Calu3 (cell line): ENCODE measurements at regions of chr4 and their contacts with region 1.

Region 1: DNA sequence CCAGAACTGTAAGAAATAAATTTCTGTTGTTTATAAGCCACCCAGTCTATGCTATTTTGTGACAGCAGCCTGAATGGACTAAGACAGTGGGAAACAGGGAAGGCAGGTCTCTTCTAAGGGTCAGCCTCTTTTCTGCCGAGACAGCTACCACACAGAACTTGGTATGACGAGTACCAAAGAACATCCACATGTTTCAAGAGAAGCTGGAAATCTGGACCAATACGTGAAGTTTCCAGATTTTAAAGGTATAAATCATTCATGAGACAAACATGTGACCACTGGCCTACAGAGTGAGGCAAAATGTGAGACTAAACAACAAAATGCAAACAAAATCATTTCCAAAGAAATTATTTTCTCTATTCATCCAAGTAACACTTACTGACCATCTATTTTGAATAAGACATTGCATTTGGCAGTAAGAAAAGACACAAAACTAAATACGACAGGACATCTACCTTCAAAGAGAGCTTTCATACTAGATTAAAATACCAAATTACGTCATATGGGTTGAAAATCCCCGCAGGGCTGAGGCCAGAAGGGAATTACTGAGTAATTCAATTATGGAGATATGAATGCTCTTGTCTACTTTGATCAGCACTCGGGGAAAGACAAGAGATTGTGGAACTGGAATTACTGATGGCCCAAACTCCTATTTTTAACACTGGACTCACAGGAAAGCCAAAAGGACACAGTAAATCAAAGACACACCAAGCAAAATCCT is 7.2 kb downstream of the SCARB2 start:
- DNase-seq: no peak
- H3K4me3 Mint-ChIP-seq: no peak overlapping the region
- H3K27ac Mint-ChIP-seq: no peak overlapping the region
- H3K4me1 Mint-ChIP-seq: peaks cover 17% of the 10 kb centered on the region
- H3K27me3 Mint-ChIP-seq: no peaks in the 10 kb centered on the region
- CTCF ChIP-seq: no peak

Region 2: DNA sequence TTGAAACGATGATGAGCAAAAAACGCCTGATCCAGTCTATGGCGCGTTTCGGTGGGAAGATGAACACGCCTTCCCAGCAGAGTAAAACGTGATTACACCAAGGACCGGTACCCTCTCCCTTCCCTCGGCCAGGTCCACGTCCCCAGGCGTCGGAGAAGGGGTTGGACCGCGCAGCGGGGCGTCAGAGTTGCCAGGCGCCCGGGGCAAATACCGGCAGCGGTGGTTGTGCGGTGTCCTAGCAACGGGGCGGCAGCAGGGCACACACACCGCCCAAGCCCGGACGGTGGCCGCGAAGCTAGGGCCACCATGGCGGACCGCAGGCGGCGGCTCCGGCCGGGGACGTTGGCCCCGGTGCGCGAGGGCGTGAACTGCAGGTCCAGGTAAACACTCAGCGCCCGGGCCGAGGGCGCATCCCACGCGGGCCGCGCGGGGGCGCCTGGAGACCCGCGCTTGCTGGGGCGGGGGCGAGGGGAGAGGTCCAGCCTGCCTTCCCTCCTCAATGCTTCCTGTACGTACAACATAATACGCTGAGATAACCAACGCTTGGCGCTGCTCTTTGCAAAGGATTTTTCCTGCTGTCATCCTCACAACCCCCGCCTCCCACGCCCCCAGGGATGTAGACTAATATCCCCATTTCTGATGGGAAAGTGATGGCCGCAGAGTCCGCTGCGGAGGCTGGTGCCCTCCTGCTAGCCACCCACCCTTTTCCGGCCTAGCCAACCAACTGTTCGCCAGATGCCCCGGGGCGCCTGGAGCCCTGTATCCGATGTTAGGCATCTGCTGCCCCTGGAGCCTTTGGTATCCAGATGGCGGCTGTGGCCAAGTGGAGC is 45.3 kb after region 1 on chr4 and contains the start of gene FAM47E:
- CTCF ChIA-PET with region 1: no interaction called
- intact Hi-C with region 1: loop called (anchors 2 kb)
- DNase-seq: peak; percentile 80
- H3K4me3 Mint-ChIP-seq: peak within 1 kb of the TSS; percentile 82
- H3K27ac Mint-ChIP-seq: peak within 1 kb of the TSS; percentile 67
- H3K4me1 Mint-ChIP-seq: peaks cover 9% of the 10 kb centered on the region
- H3K27me3 Mint-ChIP-seq: no peaks in the 10 kb centered on the region
- CTCF ChIP-seq: peak; percentile 41
- total RNA-seq, gene FAM47E: 0.57 and 1.1 TPM in 2 replicates